Common myeloid progenitor, CD34-positive (primary cell): ENCODE measurements at regions of chr4 and their contacts with region 1.

Region 1: DNA sequence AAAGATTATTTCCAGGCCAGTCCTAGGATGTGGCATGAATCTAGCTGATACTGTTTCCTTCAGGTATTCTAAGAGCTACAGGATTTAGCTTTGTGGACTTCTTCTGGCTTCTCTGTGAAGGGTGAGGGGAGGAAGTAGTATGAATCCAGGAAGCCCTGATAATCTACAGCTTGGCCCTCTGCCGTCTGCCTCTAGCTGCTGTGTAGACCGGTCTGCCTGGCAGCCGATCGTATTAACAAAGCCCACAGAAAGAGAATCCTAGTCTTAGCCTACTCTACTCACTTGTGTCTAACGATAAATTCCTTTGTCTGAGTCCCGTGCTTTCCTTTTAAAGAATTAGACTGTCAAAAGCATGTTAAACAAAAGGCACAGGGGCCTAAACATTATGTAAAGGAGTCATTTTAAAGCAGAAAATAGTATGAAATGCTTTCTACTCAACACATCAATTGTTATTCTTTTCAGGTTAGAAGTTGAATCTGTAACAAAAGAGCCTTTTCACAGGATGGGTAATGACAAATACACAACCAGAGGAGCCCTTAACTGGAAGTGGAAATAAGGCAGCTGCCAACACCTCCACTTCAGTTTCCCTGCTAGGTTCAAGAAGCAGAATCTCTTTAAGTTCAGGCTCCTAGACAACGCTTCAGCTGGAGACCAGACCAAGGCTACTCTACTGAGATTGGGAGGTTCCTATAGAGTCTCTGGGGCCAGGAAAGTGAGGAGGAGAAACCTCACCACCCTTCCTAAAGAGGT is 48.9 kb upstream of the UCP1 start:
- DNase-seq: peak; percentile 14 to 67 (median 53)
- H3K4me3 ChIP-seq: no peak overlapping the region
- H3K27ac ChIP-seq: no peak overlapping the region
- H3K4me1 ChIP-seq: peaks cover 0 to 7% (median 0%) of the 10 kb centered on the region in 4 experiments
- H3K27me3 ChIP-seq: peaks cover 0 to 2% (median 0%) of the 10 kb centered on the region in 5 experiments

Region 2: GRCh38 chr4:140637836-140638235 is 20.2 kb after region 1 on chr4:
- CTCF ChIA-PET with region 1: interaction called, 22 read pairs
- POLR2A ChIA-PET with region 1: no interaction called
- DNase-seq: peak; percentile 49 to 70 (median 69)
- H3K4me3 ChIP-seq: no peak overlapping the region
- H3K27ac ChIP-seq: no peak overlapping the region
- H3K4me1 ChIP-seq: no peaks in the 10 kb centered on the region
- H3K27me3 ChIP-seq: no peaks in the 10 kb centered on the region

Region 3: GRCh38 chr4:141058739-141059512 is 441.3 kb after region 1 on chr4:
- CTCF ChIA-PET with region 1: no interaction called
- POLR2A ChIA-PET with region 1: no interaction called
- DNase-seq: no peak
- H3K4me3 ChIP-seq: no peak overlapping the region
- H3K27ac ChIP-seq: no peak overlapping the region
- H3K4me1 ChIP-seq: no peaks in the 10 kb centered on the region
- H3K27me3 ChIP-seq: no peaks in the 10 kb centered on the region